ENCODE measurements at regions of chr13 and their contacts with region 1.

Region 1: GRCh38 chr13:38349390-38350113 is at the start of gene UFM1:
- DNase-seq: peak; percentile 77 to 82
- H3K4me3 ChIP-seq: peak within 1 kb of the TSS; percentile 84
- H3K27ac ChIP-seq: peak within 1 kb of the TSS; percentile 83
- H3K4me1 ChIP-seq: peaks cover 22% of the 10 kb centered on the region
- H3K27me3 ChIP-seq: no peaks in the 10 kb centered on the region
- CTCF ChIP-seq: no peak
- total RNA-seq, gene UFM1: 20.2 and 32.3 TPM in 2 replicates

Region 2: DNA sequence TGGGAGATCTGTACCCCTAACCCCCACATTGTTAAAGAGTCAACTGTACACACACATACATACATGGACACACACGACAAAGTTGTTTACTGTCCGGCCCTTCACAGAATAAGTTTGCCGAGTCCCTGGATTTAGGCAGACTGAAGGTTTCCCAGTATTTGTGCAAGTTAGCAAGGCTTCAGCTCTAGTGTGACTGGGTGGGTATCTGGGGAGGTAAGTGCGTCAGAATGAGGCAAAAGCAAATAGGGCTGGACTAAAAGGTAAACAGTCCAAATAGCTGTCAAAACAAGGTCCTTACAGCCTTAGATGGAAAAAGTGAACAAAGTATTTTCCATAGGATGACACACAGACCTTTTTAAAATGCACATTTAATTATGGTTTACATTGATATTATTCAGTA is 228.3 kb before region 1 on chr13:
- CTCF ChIA-PET with region 1: no interaction called
- POLR2A ChIA-PET with region 1: interaction called, 13 read pairs
- intact Hi-C with region 1: no loop called
- DNase-seq: no peak
- H3K4me3 ChIP-seq: no peak overlapping the region
- H3K27ac ChIP-seq: no peak overlapping the region
- H3K4me1 ChIP-seq: no peaks in the 10 kb centered on the region
- H3K27me3 ChIP-seq: no peaks in the 10 kb centered on the region
- CTCF ChIP-seq: no peak

Region 3: DNA sequence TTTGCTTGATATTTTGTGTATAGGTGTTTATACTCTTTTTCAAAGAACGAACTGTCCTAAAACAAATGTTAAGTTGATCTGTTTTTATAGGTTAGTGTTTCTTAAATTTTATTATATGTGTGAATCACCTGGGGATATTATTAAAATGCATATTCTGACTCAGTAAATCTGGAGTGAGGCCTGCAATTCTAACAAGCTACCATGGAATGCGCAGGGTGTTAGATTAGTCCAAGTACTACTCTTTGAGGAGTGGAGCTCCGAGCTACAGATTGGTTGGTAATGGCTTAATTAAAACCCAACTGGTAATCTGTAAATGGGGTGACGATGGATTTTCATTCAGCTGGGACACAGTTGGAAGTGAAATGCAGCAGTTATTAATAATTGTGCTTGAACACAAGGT is 214.0 kb before region 1 on chr13:
- CTCF ChIA-PET with region 1: no interaction called
- POLR2A ChIA-PET with region 1: interaction called, 12 read pairs
- intact Hi-C with region 1: no loop called
- DNase-seq: no peak
- H3K4me3 ChIP-seq: no peak overlapping the region
- H3K27ac ChIP-seq: no peak overlapping the region
- H3K4me1 ChIP-seq: no peaks in the 10 kb centered on the region
- H3K27me3 ChIP-seq: no peaks in the 10 kb centered on the region
- CTCF ChIP-seq: no peak

Region 4: GRCh38 chr13:38308736-38309135 is 40.8 kb before region 1 on chr13:
- CTCF ChIA-PET with region 1: no interaction called
- POLR2A ChIA-PET with region 1: no interaction called
- intact Hi-C with region 1: loop called (anchors 2 kb)
- DNase-seq: peak; percentile 17 to 96
- H3K4me3 ChIP-seq: no peak overlapping the region
- H3K27ac ChIP-seq: peak overlapping the region; percentile 77
- H3K4me1 ChIP-seq: peaks cover 22% of the 10 kb centered on the region
- H3K27me3 ChIP-seq: no peaks in the 10 kb centered on the region
- CTCF ChIP-seq: no peak

Measured in PC-9 (cell line).